ENCODE measurements at regions of chr16 and their contacts with region 1.

Region 1: DNA sequence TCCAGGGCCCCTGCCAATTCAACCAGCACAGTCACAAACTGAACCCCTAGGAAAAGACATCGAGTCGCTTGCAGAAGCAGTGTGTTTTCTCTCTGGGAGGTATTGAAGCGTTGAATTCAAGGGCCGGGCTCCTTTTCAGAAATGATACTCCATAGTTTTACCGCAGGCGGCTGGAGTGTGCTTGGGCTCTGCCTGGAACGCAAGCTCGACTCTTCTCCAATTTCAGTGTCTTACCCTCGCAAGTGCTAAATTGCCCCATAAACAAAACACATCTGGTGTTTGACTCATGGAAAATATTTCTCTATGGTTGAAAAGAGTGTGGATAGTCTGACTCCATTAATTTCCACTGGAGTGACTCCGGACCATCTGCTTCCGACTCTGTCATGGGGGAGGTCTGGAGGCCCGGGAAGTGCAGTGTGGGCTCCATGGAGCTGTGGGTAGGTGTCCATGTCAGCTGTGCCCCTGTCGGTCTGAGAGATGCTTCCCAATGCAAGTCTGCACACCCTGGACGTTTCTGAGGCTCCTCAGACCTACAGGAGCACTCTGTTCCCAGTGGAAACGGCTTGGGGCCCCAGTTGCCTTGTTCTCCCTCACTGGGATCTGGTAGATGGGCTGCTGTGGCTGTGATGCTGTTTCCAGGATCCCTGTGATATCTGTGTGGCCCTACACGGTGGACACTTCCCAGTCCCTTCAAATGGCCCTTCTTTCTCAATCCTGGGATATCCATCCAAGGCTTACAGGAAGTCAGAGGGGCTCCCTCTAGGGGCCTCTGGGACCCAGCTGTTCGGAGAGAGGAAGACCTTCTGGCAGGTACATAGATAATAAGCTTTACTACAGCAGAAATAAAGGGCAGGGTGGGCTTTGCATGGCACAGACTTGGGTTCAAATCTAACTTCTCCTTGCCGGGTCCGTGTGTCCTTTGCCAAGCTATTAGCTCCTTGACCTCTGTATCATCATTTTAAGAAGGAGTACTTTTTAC is 119.8 kb upstream of the CDH13 start:
- DNase-seq: no peak
- H3K4me3 ChIP-seq: no peak overlapping the region
- H3K27ac ChIP-seq: peak overlapping the region in 1 of 4 donors; percentile 21
- H3K4me1 ChIP-seq: peaks cover 0 to 8% (median 0%) of the 10 kb centered on the region in 4 donors
- H3K27me3 ChIP-seq: no peaks in the 10 kb centered on the region
- CTCF ChIP-seq: no peak
- EP300 ChIP-seq: no peak
- POLR2A ChIP-seq: no peak

Region 2: GRCh38 chr16:81265657-81266451 is 1241.1 kb before region 1 on chr16:
- in situ Hi-C with region 1: no loop called
- intact Hi-C with region 1: no loop called
- DNase-seq: peak; percentile 85
- H3K4me3 ChIP-seq: no peak overlapping the region
- H3K27ac ChIP-seq: peak overlapping the region; percentile 81 to 85 (median 84)
- H3K4me1 ChIP-seq: peaks cover 17 to 32% (median 21%) of the 10 kb centered on the region in 4 donors
- H3K27me3 ChIP-seq: no peaks in the 10 kb centered on the region
- CTCF ChIP-seq: no peak
- EP300 ChIP-seq: no peak
- POLR2A ChIP-seq: no peak

Region 3: DNA sequence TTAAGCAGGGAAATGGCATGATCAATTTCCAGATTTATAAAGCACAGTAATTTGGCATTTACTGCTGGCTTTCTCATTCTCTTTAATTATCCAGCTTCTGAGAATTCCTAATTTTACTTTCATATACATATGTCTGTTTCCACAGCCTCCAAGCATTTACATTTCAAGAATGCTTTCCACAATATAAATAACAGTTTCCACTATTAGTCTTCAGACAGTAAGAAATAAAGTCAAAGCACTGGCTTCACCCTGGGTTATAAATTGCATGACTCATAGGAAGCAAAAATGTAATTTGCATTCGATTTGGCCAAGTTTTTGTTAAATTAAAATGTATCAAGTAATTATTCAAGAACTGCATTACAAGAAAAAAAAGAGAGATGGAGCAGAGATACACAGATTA is 390.4 kb before region 1 on chr16:
- in situ Hi-C with region 1: no loop called
- intact Hi-C with region 1: no loop called
- DNase-seq: no peak
- H3K4me3 ChIP-seq: no peak overlapping the region
- H3K27ac ChIP-seq: no peak overlapping the region
- H3K4me1 ChIP-seq: no peaks in the 10 kb centered on the region
- H3K27me3 ChIP-seq: no peaks in the 10 kb centered on the region
- CTCF ChIP-seq: no peak
- EP300 ChIP-seq: no peak
- POLR2A ChIP-seq: no peak

Region 4: DNA sequence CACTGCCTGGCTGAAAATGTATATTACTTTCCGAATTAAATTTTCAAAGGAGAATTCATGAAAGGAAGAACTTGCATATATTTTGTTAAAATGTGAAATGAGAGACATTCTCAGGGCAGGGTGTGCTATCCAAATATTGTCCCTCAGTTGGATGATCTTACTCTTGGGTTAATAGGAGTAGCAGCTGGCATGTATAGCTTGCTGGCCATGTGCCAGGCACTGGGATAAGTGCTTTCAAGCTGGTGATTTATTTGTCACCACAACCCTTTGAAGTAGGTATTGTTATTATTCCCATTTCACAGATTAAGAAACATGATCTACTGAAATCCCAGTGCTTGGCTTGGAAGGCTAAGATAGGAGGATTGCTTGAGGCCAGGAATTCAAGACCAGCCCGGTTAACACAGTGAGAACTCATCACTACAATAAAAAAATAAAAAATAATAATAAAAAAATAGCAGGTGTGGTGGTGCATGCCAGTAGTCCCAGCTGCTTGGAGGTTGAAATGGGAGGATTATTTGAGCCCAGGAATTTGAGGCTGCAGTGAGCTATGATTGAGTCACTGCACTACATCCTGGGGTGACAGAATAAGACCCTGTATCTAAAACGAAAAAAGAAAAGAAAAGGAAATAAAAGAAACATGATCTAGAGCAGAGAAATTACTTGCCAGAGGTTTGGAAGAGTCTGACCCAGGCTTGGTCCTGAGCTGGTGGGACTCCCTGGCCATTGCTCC is 325.4 kb before region 1 on chr16:
- in situ Hi-C with region 1: no loop called
- intact Hi-C with region 1: no loop called
- DNase-seq: no peak
- H3K4me3 ChIP-seq: no peak overlapping the region
- H3K27ac ChIP-seq: no peak overlapping the region
- H3K4me1 ChIP-seq: no peaks in the 10 kb centered on the region
- H3K27me3 ChIP-seq: peaks cover 13% of the 10 kb centered on the region
- CTCF ChIP-seq: no peak
- EP300 ChIP-seq: no peak
- POLR2A ChIP-seq: no peak

Region 5: DNA sequence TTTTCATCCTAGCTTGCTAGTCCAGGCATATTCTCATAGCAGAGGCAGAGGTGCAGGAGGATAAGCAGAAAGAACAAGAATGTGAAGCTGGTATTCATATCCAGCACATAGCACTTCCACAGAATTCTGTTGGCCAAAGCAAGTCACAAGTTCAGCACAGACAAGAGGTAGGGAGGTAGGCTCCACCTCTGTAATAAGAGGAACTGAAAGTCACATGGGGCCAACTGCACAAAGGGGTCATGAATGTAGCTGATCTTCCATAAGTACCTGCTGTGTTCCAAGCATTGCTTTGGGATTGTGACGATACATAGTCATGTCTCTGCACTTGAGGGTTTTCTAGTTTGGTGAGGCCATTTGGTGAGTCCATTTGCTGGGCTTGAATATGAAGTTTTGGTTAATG is 226.1 kb before region 1 on chr16:
- in situ Hi-C with region 1: no loop called
- intact Hi-C with region 1: no loop called
- DNase-seq: no peak
- H3K4me3 ChIP-seq: no peak overlapping the region
- H3K27ac ChIP-seq: no peak overlapping the region
- H3K4me1 ChIP-seq: no peaks in the 10 kb centered on the region
- H3K27me3 ChIP-seq: no peaks in the 10 kb centered on the region
- CTCF ChIP-seq: no peak
- EP300 ChIP-seq: no peak
- POLR2A ChIP-seq: no peak

Region 6: DNA sequence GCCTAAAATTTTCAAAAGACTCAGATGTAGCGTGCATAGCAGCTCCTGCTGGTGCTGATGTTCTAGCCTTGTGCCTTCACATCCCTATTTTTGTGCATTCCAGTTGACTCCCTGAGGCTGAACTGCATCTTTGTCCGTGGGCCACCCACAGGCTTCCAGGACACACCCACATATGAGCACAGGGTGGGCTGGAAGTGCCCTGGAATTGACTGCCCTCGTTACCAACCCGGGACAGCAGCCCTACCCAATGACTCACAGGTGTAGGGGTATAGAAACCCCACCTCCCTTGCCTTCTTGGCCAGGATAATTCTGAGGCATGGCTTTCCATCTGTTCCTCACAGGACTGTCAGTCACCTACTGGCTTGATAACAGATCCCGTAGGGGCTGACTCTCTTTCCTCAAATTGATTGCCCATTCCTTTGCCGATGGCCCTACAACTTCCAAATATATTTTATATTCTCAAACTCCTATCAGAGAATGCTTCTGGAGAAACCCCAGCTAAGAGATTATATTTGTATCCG is 53.9 kb after region 1 on chr16:
- in situ Hi-C with region 1: no loop called
- intact Hi-C with region 1: loop called (anchors 10 kb)
- DNase-seq: no peak
- H3K4me3 ChIP-seq: no peak overlapping the region
- H3K27ac ChIP-seq: no peak overlapping the region
- H3K4me1 ChIP-seq: no peaks in the 10 kb centered on the region
- H3K27me3 ChIP-seq: no peaks in the 10 kb centered on the region
- CTCF ChIP-seq: no peak
- EP300 ChIP-seq: no peak
- POLR2A ChIP-seq: no peak

Measured in transverse colon (tissue), 4 donors.